ENCODE measurements at regions of chr11 and their contacts with region 1.

Region 1: GRCh38 chr11:62444236-62444833 is 25.5 kb downstream of the SCGB1A1 start:
- DNase-seq: peak; percentile 58
- ATAC-seq: peak; percentile 86
- H3K4me3 Mint-ChIP-seq: peak overlapping the region; percentile 83
- H3K27ac Mint-ChIP-seq: peak overlapping the region; percentile 95
- H3K4me1 Mint-ChIP-seq: peaks cover 29% of the 10 kb centered on the region
- H3K27me3 Mint-ChIP-seq: no peaks in the 10 kb centered on the region
- CTCF ChIP-seq: no peak

Region 2: GRCh38 chr11:62337303-62338181 is 106.8 kb before region 1 on chr11 and contains the start of gene ASRGL1:
- CTCF ChIA-PET with region 1: no interaction called
- POLR2A ChIA-PET with region 1: no interaction called
- intact Hi-C with region 1: loop called (anchors 2 kb)
- DNase-seq: peak; percentile 83
- ATAC-seq: peak; percentile 88
- H3K4me3 Mint-ChIP-seq: peak within 1 kb of the TSS; percentile 84
- H3K27ac Mint-ChIP-seq: no peak within 1 kb of the TSS
- H3K4me1 Mint-ChIP-seq: peaks cover 16% of the 10 kb centered on the region
- H3K27me3 Mint-ChIP-seq: peaks cover 12% of the 10 kb centered on the region
- CTCF ChIP-seq: no peak
- total RNA-seq, gene ASRGL1: 0.98 and 1.3 TPM in 2 replicates